ENCODE measurements at regions of chr15 and their contacts with region 1.

Region 1: GRCh38 chr15:93087825-93088199 is 1.2 kb downstream of the RGMA start:
- DNase-seq: peak; percentile 98
- H3K4me3 ChIP-seq: peak overlapping the region; percentile 79 to 85 (median 81)
- H3K27ac ChIP-seq: peak overlapping the region; percentile 88 to 97 (median 93)
- H3K4me1 ChIP-seq: peaks cover 11 to 74% (median 67%) of the 10 kb centered on the region in 4 donors
- H3K27me3 ChIP-seq: peaks cover 0 to 9% (median 4%) of the 10 kb centered on the region in 4 donors
- CTCF ChIP-seq: peak; percentile 91 to 93 (median 91)
- EP300 ChIP-seq: no peak
- POLR2A ChIP-seq: no peak

Region 2: GRCh38 chr15:93030430-93031105 is 57.2 kb before region 1 on chr15:
- intact Hi-C with region 1: loop called (anchors 5 kb)
- DNase-seq: no peak
- H3K4me3 ChIP-seq: peak overlapping the region in 1 of 4 donors; percentile 28
- H3K27ac ChIP-seq: peak overlapping the region; percentile 84 to 91 (median 89)
- H3K4me1 ChIP-seq: peaks cover 48 to 57% (median 57%) of the 10 kb centered on the region in 4 donors
- H3K27me3 ChIP-seq: peaks cover 0 to 5% (median 0%) of the 10 kb centered on the region in 4 donors
- CTCF ChIP-seq: peak; percentile 88 to 96 (median 94)
- EP300 ChIP-seq: no peak
- POLR2A ChIP-seq: no peak

Region 3: DNA sequence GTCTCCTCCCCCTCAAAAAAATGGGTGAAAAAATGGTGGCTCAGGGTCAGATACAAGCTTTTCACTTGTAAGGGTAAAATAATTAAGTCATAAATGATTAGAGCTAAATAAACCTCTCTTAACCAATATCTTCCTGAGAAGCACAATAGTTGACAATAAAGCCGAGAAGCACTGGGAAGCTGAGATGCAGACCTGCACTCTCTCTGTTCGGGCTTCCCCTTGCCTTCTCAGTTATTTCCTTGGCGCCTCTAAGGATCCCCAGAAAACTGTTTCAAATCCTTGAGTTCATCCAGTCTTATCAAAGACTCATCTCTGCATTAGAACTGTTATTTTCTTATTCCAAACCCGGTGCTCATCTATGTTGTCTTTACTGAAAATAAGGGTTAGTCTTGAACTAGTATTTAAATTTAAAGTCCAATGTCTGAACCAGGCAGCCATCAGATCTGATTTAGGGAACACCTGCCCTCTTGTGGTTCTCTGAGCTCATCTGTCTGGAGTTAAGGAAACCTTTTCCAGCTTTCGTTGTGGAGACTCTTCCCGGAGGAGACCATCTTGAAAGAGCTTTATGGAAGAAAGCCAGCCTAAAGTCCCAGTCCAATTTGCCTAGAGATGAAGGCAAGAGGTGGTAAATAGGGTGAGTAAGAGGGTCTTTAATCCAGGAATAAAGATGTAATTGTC is 887.1 kb after region 1 on chr15:
- intact Hi-C with region 1: loop called (anchors 5 kb)
- DNase-seq: no peak
- H3K4me3 ChIP-seq: no peak overlapping the region
- H3K27ac ChIP-seq: no peak overlapping the region
- H3K4me1 ChIP-seq: peaks cover 0 to 7% (median 2%) of the 10 kb centered on the region in 4 donors
- H3K27me3 ChIP-seq: no peaks in the 10 kb centered on the region
- CTCF ChIP-seq: peak; percentile 48 to 62 (median 59)
- EP300 ChIP-seq: no peak
- POLR2A ChIP-seq: no peak